Activated CD8-positive, alpha-beta T cell treated with anti-CD3 and anti-CD28 coated beads, Interleukin-2, amount 10 ng/mL, durations not matched to agents 7 days and 5 days (primary cell): ENCODE measurements at regions of chr3 and their contacts with region 1.

Region 1: DNA sequence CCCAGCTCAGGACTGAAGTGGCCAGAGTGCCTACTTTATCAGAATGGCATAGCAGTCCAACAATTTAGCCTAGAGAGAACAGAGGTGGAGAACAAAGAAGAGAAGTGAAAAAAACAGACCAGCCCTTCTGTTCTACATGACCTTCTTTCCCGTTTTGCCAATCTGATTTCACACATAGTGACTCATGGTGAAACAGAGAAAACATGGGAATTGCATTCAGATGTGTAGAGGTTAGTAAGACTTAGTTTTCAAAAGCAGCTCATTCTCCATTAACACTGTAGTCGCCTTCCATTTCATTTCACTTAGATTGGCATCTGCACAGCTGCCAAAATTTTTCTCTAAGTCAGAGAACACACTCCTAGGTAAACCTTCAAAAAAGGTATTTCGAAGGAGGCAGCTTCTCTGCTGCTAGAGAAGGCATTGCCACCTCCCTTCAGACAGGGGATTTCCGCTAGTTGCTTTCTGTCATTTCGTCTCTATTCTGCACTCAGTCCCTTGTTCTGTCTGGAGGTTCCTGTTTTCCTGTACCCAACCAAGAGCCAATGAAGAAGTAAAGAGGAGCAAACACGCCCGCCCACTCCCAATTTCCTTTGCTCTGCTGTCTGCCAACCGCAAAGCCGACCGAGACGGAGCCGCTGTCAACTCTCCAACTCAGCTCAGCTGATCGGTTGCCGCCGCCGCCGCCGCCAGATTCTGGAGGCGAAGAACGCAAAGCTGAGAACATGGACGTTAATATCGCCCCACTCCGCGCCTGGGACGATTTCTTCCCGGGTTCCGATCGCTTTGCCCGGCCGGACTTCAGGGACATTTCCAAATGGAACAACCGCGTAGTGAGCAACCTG is at the start of gene ARL6IP5:
- DNase-seq: peak; percentile 96
- ATAC-seq: peak; percentile 65
- H3K4me3 Mint-ChIP-seq: peak within 1 kb of the TSS; percentile 95
- H3K27ac Mint-ChIP-seq: peak within 1 kb of the TSS; percentile 89
- H3K4me1 Mint-ChIP-seq: peaks cover 57% of the 10 kb centered on the region
- H3K27me3 Mint-ChIP-seq: no peaks in the 10 kb centered on the region
- total RNA-seq, gene ARL6IP5: 148 to 153 TPM

Region 2: GRCh38 chr3:69051756-69052471 is 32.6 kb before region 1 on chr3 and contains the start of gene TMF1:
- CTCF ChIA-PET with region 1: interaction called, 8 read pairs
- POLR2A ChIA-PET with region 1: interaction called, 83 read pairs
- DNase-seq: peak; percentile 99
- ATAC-seq: peak; percentile 92
- H3K4me3 Mint-ChIP-seq: peak within 1 kb of the TSS; percentile 90
- H3K27ac Mint-ChIP-seq: peak within 1 kb of the TSS; percentile 91
- H3K4me1 Mint-ChIP-seq: peaks cover 51% of the 10 kb centered on the region
- H3K27me3 Mint-ChIP-seq: no peaks in the 10 kb centered on the region
- total RNA-seq, gene TMF1: 47.5 to 49.3 TPM

Region 3: GRCh38 chr3:69058180-69058946 is 26.2 kb before region 1 on chr3:
- CTCF ChIA-PET with region 1: interaction called, 11 read pairs
- POLR2A ChIA-PET with region 1: interaction called, 83 read pairs
- DNase-seq: peak; percentile 49
- ATAC-seq: peak; percentile 99
- H3K4me3 Mint-ChIP-seq: peak overlapping the region; percentile 41
- H3K27ac Mint-ChIP-seq: peak overlapping the region; percentile 90
- H3K4me1 Mint-ChIP-seq: peaks cover 47% of the 10 kb centered on the region
- H3K27me3 Mint-ChIP-seq: no peaks in the 10 kb centered on the region